ENCODE measurements at regions of chr5 and their contacts with region 1.

Region 1: DNA sequence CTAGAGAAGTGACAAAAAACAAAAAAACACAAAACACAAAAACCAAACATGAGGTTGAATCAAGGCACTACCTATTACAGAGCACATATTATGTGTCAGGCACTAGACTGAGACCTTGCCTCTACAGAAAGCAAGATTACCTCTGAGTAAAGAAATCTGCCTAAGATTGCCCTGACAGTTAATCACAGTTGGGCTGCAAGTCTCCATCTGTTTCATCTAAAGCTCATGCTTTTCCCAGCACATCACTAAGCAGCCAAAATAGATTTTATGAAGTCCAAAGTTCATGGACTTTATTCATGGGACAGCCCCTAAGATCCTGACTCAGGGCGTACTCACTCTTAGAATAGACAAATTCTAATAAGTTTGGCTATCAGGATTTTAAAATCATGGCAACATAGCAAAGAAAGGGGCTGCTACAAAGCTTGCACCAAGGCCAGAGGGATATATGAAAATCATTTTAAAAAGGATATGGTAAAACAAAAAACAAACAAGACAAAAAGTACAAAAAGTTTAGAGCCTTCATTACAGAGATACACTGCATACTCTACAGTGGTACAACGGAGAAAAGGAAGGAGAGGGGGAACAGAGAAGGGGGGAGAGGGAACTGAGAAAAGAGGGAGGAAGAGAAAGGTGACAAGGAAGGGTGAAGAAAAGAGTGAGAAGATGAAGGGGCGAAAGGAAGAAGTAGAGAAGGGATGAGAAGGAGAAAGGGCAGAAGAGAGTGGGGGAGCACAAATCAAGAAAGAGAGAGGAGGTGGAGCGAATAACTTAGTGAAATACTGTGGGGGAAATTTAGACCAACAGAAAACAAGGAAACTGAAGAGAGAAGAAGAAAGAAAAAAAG is 58.2 kb downstream of the RICTOR start:
- DNase-seq: no peak

Region 2: GRCh38 chr5:37786862-37787519 is 1229.0 kb before region 1 on chr5:
- intact Hi-C with region 1: no loop called
- DNase-seq: no peak

Region 3: DNA sequence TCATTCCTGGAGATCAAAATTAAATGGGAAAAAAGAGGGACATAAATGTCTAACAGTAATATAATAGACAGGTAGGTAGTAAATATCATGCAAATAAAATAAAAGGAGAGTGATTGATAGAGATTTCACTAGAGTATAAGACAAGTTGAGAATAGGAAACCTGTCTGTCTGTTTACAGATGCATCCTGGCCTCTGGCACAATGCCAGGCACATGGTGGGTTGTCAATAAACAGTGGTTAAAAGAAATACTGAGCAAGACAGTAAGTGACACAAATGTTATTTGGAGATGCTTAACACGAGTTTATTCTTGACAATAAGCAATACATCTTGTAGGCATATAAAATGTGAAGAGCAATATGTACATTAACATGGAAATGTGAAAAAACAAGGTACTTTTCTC is 24.9 kb after region 1 on chr5:
- intact Hi-C with region 1: no loop called
- DNase-seq: peak; percentile 74

Region 4: GRCh38 chr5:39074016-39074886 is 58.3 kb after region 1 on chr5 and contains the start of gene RICTOR:
- intact Hi-C with region 1: loop called (anchors 5 to 10 kb)
- DNase-seq: peak; percentile 97
- total RNA-seq, gene RICTOR: 37.0 to 50.1 TPM

Region 5: DNA sequence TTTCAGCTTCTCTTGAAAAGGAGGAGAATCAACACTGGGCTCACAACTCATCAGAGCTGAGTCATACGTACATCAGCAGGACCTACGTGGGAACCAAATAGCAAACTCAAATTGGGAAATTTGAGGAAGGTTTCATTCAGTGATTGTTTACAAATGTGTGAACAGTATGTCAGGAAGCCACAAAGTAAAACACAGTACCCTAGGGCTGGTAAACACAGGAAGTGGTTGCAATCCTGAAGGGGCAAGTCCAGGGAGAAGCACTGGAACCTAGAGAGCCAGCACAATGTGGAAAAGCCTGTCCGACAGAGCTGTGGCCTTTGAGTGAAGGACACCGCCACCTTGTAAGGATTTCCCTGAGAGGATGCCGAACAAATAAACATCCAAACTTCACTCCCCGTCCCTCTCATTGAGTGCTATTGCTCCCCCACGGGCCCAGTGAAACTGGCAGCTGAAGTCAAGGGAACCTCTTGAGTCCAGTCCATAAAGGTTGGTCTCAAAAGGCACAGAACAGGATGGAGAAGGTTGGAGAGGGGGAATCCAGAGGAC is 85.0 kb after region 1 on chr5:
- intact Hi-C with region 1: no loop called
- DNase-seq: no peak

Measured in posterior vena cava (tissue), 2 donors.